Mammary epithelial cell (primary cell): ENCODE measurements at regions of chr19 and their contacts with region 1.

Region 1: GRCh38 chr19:1848399-1849131 is at the start of gene REXO1:
- DNase-seq: peak; percentile 94
- H3K4me3 ChIP-seq: peak within 1 kb of the TSS; percentile 62 to 100 (median 90)
- H3K27ac ChIP-seq: peak within 1 kb of the TSS; percentile 92
- H3K4me1 ChIP-seq: peaks cover 47% of the 10 kb centered on the region
- H3K27me3 ChIP-seq: no peaks in the 10 kb centered on the region
- CTCF ChIP-seq: peak; percentile 84 to 91
- total RNA-seq, gene REXO1: 11.3 to 41.0 TPM

Region 2: DNA sequence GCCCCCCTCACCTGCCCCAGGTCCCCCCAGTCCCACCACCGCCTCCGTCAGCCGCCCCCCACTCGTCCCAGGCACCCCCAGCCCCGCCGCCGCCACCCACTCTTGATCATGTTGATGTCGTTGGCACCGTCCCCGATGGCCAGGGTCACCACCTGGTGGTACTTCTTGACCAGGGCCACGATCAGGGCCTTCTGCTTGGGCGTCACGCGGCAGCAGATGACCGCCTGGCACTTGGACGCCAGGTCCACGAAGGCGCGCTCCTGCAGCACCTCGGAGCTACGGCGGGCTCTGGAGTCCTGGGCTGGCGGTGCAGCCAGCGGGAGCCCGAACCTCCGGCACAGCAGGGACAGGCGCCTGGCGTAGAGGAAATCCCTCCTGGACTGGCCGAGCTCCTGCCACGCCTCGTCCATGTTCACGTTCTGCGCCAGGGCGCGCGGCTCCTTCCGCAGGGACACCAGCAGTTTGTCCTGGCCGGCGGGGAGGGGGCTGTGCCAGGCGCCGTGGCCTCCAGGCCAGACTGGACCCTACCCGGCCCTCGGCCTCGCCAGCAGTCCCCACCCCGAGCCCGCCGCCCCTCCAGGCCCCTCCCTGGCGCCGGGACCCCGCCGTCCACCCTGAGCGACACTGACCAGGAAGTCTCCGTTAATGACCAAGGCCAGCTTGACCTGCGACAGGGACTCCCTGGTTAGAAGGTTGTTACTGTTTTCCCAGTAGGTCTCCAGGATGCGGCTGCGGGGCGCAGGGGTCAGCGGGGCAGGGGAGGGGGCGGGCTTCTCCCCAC is 59.1 kb before region 1 on chr19:
- CTCF ChIA-PET with region 1: no interaction called
- dilution Hi-C with region 1: loop called (anchors 5 kb)
- in situ Hi-C with region 1: no loop called
- intact Hi-C with region 1: no loop called
- DNase-seq: peak; percentile 13
- H3K4me3 ChIP-seq: no peak overlapping the region
- H3K27ac ChIP-seq: no peak overlapping the region
- H3K4me1 ChIP-seq: no peaks in the 10 kb centered on the region
- H3K27me3 ChIP-seq: no peaks in the 10 kb centered on the region
- CTCF ChIP-seq: no peak

Region 3: DNA sequence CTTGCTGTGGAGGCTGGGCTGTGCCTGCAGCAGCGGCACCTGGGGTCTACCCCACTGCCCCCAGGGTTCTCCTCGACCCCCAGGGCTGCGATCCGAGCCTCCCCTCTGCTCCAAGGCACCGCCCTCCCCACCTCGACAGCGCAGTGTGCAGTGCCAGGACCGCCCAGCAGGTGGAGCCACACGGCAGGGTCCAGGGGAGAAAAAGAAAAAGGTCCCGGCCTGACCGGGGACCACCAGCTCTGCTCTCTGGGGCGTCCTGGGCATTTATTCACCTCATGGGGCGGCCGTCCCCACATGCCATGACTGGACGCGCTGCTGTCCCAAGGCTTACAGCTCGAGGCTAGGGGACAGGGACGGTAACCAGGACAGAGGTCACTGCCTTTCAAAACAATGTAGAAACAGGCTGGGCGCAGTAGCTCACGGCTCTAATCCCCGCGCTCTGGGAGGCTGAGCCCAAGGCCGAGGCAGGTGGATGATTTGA is 10.9 kb before region 1 on chr19:
- CTCF ChIA-PET with region 1: interaction called, 23 read pairs
- dilution Hi-C with region 1: no loop called
- in situ Hi-C with region 1: no loop called
- intact Hi-C with region 1: no loop called
- DNase-seq: no peak
- H3K4me3 ChIP-seq: no peak overlapping the region
- H3K27ac ChIP-seq: no peak overlapping the region
- H3K4me1 ChIP-seq: peaks cover 6% of the 10 kb centered on the region
- H3K27me3 ChIP-seq: peaks cover 1% of the 10 kb centered on the region
- CTCF ChIP-seq: peak; percentile 85 to 90

Region 4: GRCh38 chr19:1863726-1864480 is 15.3 kb after region 1 on chr19:
- CTCF ChIA-PET with region 1: no interaction called
- dilution Hi-C with region 1: no loop called
- in situ Hi-C with region 1: no loop called
- intact Hi-C with region 1: loop called (anchors 1 kb)
- DNase-seq: peak; percentile 91
- H3K4me3 ChIP-seq: peak overlapping the region; percentile 60 to 71 (median 65)
- H3K27ac ChIP-seq: peak overlapping the region; percentile 64
- H3K4me1 ChIP-seq: peaks cover 33% of the 10 kb centered on the region
- H3K27me3 ChIP-seq: no peaks in the 10 kb centered on the region
- CTCF ChIP-seq: no peak